Calu3 (cell line): ENCODE measurements at regions of chr12 and their contacts with region 1.

Region 1: DNA sequence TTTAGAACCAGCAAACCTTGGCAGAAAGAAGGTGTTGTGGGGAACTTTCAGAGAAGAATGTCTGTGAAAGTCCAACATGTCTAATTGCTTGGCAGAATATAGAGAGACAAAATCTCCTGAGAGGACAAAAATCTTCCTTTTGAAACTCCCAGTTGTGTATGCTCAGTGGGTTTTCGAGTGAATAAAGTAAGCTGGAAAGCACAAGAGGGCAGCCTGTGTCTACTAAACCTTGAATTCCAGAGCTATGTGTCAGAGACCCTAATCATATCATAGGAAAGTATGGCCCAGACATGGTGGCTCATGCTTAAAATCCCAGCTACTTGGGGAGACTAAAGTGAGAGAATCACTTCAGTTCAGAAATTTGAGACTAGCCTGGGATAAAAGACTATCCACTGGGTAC is 661.2 kb downstream of the SLC16A7 start:
- DNase-seq: peak; percentile 36
- H3K4me3 Mint-ChIP-seq: no peak overlapping the region
- H3K27ac Mint-ChIP-seq: peak overlapping the region; percentile 1
- H3K4me1 Mint-ChIP-seq: peaks cover 29% of the 10 kb centered on the region
- H3K27me3 Mint-ChIP-seq: no peaks in the 10 kb centered on the region
- CTCF ChIP-seq: no peak

Region 2: DNA sequence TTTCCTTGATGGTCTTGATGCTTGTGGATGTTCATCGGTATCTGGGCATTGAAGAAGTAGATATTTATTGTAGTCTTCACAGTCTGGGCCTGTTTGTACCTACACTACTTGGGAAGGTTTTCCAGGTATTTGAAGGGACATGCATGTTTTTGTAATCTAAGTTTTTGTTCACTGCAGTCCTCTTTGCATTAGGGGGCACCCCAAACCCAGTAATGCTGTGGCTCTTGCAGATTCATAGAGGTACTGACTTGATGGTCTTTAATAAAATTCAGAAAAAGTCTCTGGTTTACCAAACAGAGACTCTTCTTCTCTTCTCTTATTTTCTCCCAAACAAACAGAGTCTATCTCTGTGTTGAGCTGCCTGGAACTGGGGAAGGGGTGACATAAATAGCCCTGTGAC is 812.1 kb before region 1 on chr12:
- CTCF ChIA-PET with region 1: no interaction called
- intact Hi-C with region 1: loop called (anchors 10 kb)
- DNase-seq: peak; percentile 45
- H3K4me3 Mint-ChIP-seq: no peak overlapping the region
- H3K27ac Mint-ChIP-seq: no peak overlapping the region
- H3K4me1 Mint-ChIP-seq: peaks cover 13% of the 10 kb centered on the region
- H3K27me3 Mint-ChIP-seq: no peaks in the 10 kb centered on the region
- CTCF ChIP-seq: no peak

Region 3: DNA sequence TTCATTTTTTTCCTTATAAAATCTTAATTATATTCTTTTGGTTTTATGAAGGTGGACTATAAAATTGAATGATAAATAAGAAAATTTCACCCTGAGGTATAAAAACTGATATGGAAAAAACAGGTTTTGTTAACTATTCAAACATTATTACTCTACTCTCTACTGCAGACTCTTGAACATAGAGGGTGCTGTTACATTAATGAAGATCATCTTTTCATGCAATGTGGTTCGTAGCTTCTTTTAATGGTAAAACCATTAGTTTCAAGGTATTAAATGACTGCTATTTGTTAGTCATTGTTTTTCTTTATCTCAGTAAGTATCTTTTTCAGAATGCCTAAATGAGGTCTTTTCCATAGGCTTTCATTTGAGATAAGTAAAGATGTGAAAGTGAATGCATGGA is 150.8 kb before region 1 on chr12:
- CTCF ChIA-PET with region 1: interaction called, 4 read pairs
- intact Hi-C with region 1: loop called (anchors 5 kb)
- DNase-seq: no peak
- H3K4me3 Mint-ChIP-seq: no peak overlapping the region
- H3K27ac Mint-ChIP-seq: no peak overlapping the region
- H3K4me1 Mint-ChIP-seq: peaks cover 7% of the 10 kb centered on the region
- H3K27me3 Mint-ChIP-seq: no peaks in the 10 kb centered on the region
- CTCF ChIP-seq: no peak

Region 4: DNA sequence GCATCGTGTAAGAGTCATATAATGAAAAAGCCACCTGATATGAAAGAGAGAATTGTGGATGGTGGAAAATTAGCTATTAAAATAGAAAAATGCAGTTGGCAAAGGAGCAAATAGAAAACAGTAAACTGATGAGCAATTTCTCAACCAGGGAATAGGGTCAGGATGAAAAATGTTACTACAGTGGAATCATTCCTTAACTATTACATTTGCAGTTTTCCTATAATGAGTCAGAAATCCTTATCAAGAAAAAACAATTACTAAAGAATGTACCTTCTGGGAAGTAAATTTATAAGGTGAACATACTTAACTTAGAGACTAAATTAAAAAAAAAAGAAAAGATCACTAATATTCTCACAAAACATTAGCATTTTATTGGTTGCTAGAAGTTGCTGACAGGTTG is 84.8 kb before region 1 on chr12:
- CTCF ChIA-PET with region 1: no interaction called
- intact Hi-C with region 1: loop called (anchors 2 kb)
- DNase-seq: no peak
- H3K4me3 Mint-ChIP-seq: peak overlapping the region; percentile 7
- H3K27ac Mint-ChIP-seq: peak overlapping the region; percentile 89
- H3K4me1 Mint-ChIP-seq: peaks cover 32% of the 10 kb centered on the region
- H3K27me3 Mint-ChIP-seq: no peaks in the 10 kb centered on the region
- CTCF ChIP-seq: no peak